Activated CD4-positive, alpha-beta T cell treated with anti-CD3 and anti-CD28 coated beads, Interleukin-2, amount 10 ng/mL, durations not matched to agents 24 days and 14 days (primary cell): ENCODE measurements at regions of chr5 and their contacts with region 1.

Region 1: DNA sequence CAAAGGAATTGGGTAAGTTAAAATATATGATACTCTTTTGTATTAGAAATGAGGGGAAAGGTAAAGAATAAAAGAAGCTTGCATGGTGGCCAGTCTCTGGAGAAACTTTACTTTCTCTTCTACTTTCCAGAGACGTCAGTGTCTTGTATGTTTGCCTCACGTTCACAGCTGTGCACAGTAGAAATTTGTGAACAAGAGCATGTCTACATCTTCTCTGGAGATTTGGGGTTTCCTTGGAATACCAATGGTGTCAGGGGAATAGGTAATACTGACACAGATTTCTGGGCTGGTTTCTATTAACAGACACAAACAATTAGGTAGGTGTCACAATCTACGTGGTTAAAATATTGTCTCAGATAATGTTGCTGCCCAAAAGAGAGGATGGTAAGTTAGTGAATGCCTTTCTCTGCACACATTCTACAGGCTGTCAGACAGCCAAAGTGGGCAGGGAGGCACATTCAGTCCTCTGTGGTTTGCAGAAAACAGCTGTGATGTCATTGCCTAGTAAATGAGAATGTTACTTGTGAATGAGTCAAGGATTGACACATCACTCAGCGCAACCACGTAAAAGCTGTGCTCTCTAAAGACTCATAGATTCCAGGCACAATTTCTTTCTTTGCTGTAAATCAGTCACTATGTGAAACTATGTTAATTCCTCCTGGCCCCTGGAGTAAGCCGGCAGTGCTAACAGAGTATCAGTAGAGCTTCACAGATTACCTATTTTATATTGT is 397.1 kb downstream of the MAN2A1 start:
- DNase-seq: peak; percentile 80
- H3K4me3 Mint-ChIP-seq: peak overlapping the region; percentile 52
- H3K27ac Mint-ChIP-seq: peak overlapping the region; percentile 82
- H3K4me1 Mint-ChIP-seq: peaks cover 30% of the 10 kb centered on the region
- H3K27me3 Mint-ChIP-seq: no peaks in the 10 kb centered on the region

Region 2: DNA sequence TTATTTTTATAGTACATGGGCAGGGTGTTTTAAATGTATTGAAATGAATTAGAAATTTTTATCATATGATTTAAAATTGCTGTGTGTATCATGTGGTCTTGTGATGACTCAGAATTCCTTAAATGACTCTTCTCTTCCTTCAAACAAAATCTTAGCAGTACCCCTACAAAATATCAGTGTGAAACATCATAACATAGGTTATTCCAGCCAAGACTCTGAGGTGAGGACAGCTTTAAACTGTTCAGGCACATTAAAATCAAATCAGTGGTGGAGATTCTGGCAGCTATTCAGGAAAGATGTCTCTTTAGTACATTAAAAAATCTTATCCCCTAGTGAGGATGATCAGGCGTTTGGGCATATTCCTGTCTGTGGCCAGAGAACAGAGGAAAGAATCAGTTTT is 223.1 kb before region 1 on chr5:
- intact Hi-C with region 1: loop called (anchors 2 kb)
- DNase-seq: no peak
- H3K4me3 Mint-ChIP-seq: no peak overlapping the region
- H3K27ac Mint-ChIP-seq: no peak overlapping the region
- H3K4me1 Mint-ChIP-seq: peaks cover 24% of the 10 kb centered on the region
- H3K27me3 Mint-ChIP-seq: no peaks in the 10 kb centered on the region

Region 3: DNA sequence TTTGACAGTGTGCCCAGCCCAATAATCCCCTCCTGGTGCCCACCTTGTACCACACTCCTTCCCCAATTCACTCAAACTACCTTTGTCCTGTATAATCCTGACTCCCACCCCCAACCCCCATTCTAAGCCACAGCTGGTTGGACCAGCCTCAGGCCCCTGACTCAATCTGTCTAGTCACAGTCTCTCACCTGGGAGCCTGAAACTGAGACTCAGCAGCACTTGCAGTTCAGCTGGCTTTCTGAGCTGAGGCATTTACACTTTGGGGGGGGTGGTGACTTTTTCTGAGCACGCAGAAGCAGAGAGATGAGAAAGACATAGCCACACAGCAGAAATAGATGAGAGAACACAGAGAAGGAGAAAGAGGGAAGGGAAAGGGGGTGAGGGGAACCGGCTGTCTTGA is 149.8 kb before region 1 on chr5:
- intact Hi-C with region 1: loop called (anchors 1 kb)
- DNase-seq: peak; percentile 64
- H3K4me3 Mint-ChIP-seq: peak overlapping the region; percentile 27
- H3K27ac Mint-ChIP-seq: peak overlapping the region; percentile 25
- H3K4me1 Mint-ChIP-seq: peaks cover 15% of the 10 kb centered on the region
- H3K27me3 Mint-ChIP-seq: no peaks in the 10 kb centered on the region

Region 4: GRCh38 chr5:110054240-110054639 is 32.6 kb before region 1 on chr5:
- intact Hi-C with region 1: loop called (anchors 1 kb)
- DNase-seq: peak; percentile 92
- H3K4me3 Mint-ChIP-seq: peak overlapping the region; percentile 18
- H3K27ac Mint-ChIP-seq: peak overlapping the region; percentile 74
- H3K4me1 Mint-ChIP-seq: peaks cover 21% of the 10 kb centered on the region
- H3K27me3 Mint-ChIP-seq: no peaks in the 10 kb centered on the region

Region 5: GRCh38 chr5:110321117-110321516 is 234.3 kb after region 1 on chr5:
- intact Hi-C with region 1: no loop called
- DNase-seq: no peak
- H3K4me3 Mint-ChIP-seq: no peak overlapping the region
- H3K27ac Mint-ChIP-seq: no peak overlapping the region
- H3K4me1 Mint-ChIP-seq: no peaks in the 10 kb centered on the region
- H3K27me3 Mint-ChIP-seq: no peaks in the 10 kb centered on the region

Region 6: GRCh38 chr5:111223889-111224563 is 1137.2 kb after region 1 on chr5 and contains the start of gene CAMK4:
- intact Hi-C with region 1: loop called (anchors 10 kb)
- DNase-seq: peak; percentile 94
- H3K4me3 Mint-ChIP-seq: peak within 1 kb of the TSS; percentile 97
- H3K27ac Mint-ChIP-seq: peak within 1 kb of the TSS; percentile 95
- H3K4me1 Mint-ChIP-seq: peaks cover 35% of the 10 kb centered on the region
- H3K27me3 Mint-ChIP-seq: peaks cover 2% of the 10 kb centered on the region
- total RNA-seq, gene CAMK4: 47.7 and 49.5 TPM in 2 replicates